Gastrocnemius medialis (tissue), 4 donors: ENCODE measurements at regions of chr15 and their contacts with region 1.

Region 1: DNA sequence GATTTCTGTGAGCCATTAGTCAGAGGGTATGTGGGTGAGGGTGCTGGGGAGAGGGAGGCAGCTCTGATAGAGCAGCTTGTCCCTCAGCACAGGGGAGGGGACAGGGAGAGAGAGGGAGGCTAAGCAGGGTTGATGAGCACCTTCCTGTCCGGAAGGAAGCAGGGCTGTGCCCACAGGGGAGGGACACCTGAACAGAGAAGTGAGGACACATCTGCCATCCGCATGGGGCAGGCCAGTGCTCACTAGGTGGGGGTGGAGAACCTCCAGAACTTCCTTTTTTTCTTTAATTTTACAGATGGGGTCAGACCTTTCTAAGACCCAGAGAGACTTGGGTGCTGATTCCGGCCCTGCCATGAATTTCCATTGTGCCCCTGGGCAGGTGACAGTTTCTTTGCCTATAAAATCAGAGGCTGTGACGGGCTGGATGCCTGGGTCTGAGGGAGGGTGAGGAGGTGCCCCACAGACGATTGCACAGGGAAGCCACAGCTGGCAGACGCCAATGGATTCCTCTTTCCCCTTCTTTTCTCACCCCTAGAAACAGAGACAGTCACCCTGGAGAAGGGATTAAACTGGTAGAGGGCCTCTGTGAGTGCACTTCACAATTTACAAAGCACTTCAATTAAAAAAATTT is 4.1 kb upstream of the TGM5 start:
- DNase-seq: no peak
- ATAC-seq: no peak
- H3K4me3 ChIP-seq: no peak overlapping the region
- H3K27ac ChIP-seq: no peak overlapping the region
- H3K4me1 ChIP-seq: peaks cover 21 to 25% of the 10 kb centered on the region in 2 donors
- H3K27me3 ChIP-seq: no peaks in the 10 kb centered on the region
- CTCF ChIP-seq: no peak
- POLR2A ChIP-seq: no peak

Region 2: GRCh38 chr15:43105778-43106485 is 164.9 kb before region 1 on chr15 and contains the start of gene UBR1:
- in situ Hi-C with region 1: no loop called
- intact Hi-C with region 1: loop called (anchors 10 kb)
- DNase-seq: peak; percentile 82 to 90
- ATAC-seq: peak; percentile 92 to 94
- H3K4me3 ChIP-seq: peak within 1 kb of the TSS; percentile 69 to 98 (median 84)
- H3K27ac ChIP-seq: peak within 1 kb of the TSS; percentile 77 to 95 (median 90)
- H3K4me1 ChIP-seq: peaks cover 32 to 48% of the 10 kb centered on the region in 2 donors
- H3K27me3 ChIP-seq: no peaks in the 10 kb centered on the region
- CTCF ChIP-seq: no peak
- POLR2A ChIP-seq: peak; percentile 72 to 73
- total RNA-seq, gene UBR1: 20.2 to 31.3 (median 22.5) TPM